Left colon (tissue), 2 donors: ENCODE measurements at regions of chr3 and their contacts with region 1.

Region 1: GRCh38 chr3:50186096-50186495 is 5.3 kb upstream of the GNAT1 start:
- DNase-seq: no peak
- ATAC-seq: no peak

Region 2: GRCh38 chr3:50121416-50122032 is 64.6 kb before region 1 on chr3:
- intact Hi-C with region 1: loop called in 1 of 2 experiments (anchors 2 kb)
- DNase-seq: peak; percentile 61 to 84
- ATAC-seq: peak; percentile 80

Region 3: GRCh38 chr3:50235716-50236496 is 49.8 kb after region 1 on chr3 and contains the start of gene GNAI2:
- intact Hi-C with region 1: no loop called
- DNase-seq: peak; percentile 98 to 99
- ATAC-seq: peak; percentile 87
- total RNA-seq, gene GNAI2: 46.1 to 81.3 TPM